Right cardiac atrium (tissue), 5 donors: ENCODE measurements at regions of chr19 and their contacts with region 1.

Region 1: GRCh38 chr19:2151339-2152229 is at the start of gene AP3D1:
- DNase-seq: peak; percentile 100
- ATAC-seq: peak; percentile 98 to 99
- H3K4me3 ChIP-seq: peak within 1 kb of the TSS; percentile 64
- H3K27ac ChIP-seq: peak within 1 kb of the TSS; percentile 31
- H3K4me1 ChIP-seq: peaks cover 6% of the 10 kb centered on the region
- H3K27me3 ChIP-seq: no peaks in the 10 kb centered on the region
- total RNA-seq, gene AP3D1: 82.7 to 145 (median 92.9) TPM

Region 2: GRCh38 chr19:2096480-2097329 is 54.9 kb before region 1 on chr19 and contains the start of gene IZUMO4:
- intact Hi-C with region 1: no loop called
- DNase-seq: peak; percentile 99 to 100 (median 100)
- ATAC-seq: peak; percentile 89 to 91
- H3K4me3 ChIP-seq: peak within 1 kb of the TSS; percentile 68
- H3K27ac ChIP-seq: peak within 1 kb of the TSS; percentile 79
- H3K4me1 ChIP-seq: peaks cover 3% of the 10 kb centered on the region
- H3K27me3 ChIP-seq: no peaks in the 10 kb centered on the region
- total RNA-seq, gene IZUMO4: 1.1 to 3.3 (median 2.3) TPM

Region 3: DNA sequence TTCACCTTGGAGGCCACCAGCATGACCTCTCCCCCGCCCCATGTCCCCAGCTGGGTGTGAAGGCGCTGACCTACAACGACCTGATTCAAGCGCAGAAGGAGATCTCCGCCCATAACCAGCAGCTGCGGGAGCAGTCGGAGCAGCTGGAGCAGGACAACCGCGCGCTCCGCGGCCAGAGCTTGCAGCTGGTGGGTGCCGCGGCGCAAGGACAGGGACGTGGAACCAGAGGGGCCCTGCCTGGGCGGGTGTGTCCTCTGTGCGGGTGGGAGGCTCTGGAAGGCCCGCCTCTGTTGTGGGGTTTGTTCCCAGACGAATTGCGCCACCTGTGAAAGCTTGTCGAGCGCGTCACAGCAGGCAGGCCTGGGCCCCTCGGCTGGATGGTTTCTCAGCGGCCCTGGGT is 62.2 kb after region 1 on chr19:
- intact Hi-C with region 1: loop called in 1 of 4 experiments (anchors 10 kb)
- DNase-seq: no peak
- ATAC-seq: no peak
- H3K4me3 ChIP-seq: no peak overlapping the region
- H3K27ac ChIP-seq: no peak overlapping the region
- H3K4me1 ChIP-seq: no peaks in the 10 kb centered on the region
- H3K27me3 ChIP-seq: no peaks in the 10 kb centered on the region

Region 4: GRCh38 chr19:2221918-2222317 is 70.3 kb after region 1 on chr19:
- intact Hi-C with region 1: loop called in 2 of 4 experiments (anchors 10 kb)
- DNase-seq: no peak
- ATAC-seq: peak in 1 of 2 donors; percentile 2
- H3K4me3 ChIP-seq: no peak overlapping the region
- H3K27ac ChIP-seq: no peak overlapping the region
- H3K4me1 ChIP-seq: no peaks in the 10 kb centered on the region
- H3K27me3 ChIP-seq: no peaks in the 10 kb centered on the region

Region 5: DNA sequence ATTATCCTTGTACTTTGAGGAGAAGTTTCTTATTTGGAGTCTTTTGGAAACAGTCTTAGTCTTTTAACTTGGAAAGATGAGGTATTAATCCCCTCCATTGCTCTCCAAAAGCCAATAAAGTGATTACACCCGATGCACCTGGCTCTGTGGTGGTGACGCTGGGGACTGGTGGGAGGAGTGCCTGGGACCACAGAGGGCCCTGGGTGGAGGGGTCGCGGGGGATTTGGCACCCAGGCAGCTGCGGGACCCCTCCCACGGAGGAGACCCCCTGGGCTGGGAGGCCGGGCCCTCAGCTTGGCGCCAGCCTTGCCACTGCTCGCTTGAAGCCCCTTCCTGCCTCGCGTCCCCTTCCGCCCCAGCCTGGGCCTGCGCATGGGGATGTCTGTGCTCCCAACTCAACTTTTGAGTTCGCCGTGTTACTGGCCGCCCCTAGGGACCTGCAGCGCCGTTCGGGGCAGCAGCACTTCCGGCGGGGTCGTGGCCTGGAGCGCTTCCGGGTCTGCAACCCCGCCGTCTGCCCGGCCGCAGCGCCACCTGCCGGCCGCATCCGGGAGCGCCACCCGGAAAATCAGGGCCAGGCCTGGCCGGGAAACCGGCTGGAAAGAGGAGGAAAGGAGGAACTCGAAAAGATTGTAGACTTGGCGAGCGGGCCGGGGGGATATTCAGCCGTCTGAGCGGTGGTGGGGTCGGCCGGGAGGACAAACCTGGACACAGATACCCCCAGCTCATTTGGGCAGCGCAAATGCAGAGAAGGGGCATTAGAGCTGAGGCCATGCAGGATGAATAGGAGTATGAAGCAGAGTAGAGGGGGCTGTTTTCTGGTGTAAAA is 122.0 kb after region 1 on chr19:
- intact Hi-C with region 1: loop called in 1 of 4 experiments (anchors 5 kb)
- DNase-seq: peak; percentile 80 to 93 (median 92)
- ATAC-seq: peak; percentile 7 to 17
- H3K4me3 ChIP-seq: no peak overlapping the region
- H3K27ac ChIP-seq: peak overlapping the region; percentile 26
- H3K4me1 ChIP-seq: peaks cover 2% of the 10 kb centered on the region
- H3K27me3 ChIP-seq: no peaks in the 10 kb centered on the region

Region 6: GRCh38 chr19:2315818-2316353 is 164.3 kb after region 1 on chr19:
- intact Hi-C with region 1: loop called in 2 of 4 experiments (anchors 2 to 5 kb)
- DNase-seq: peak; percentile 69 to 89 (median 89)
- ATAC-seq: peak; percentile 83 to 84
- H3K4me3 ChIP-seq: no peak overlapping the region
- H3K27ac ChIP-seq: no peak overlapping the region
- H3K4me1 ChIP-seq: no peaks in the 10 kb centered on the region
- H3K27me3 ChIP-seq: no peaks in the 10 kb centered on the region

Region 7: GRCh38 chr19:2385053-2385721 is 233.6 kb after region 1 on chr19:
- intact Hi-C with region 1: loop called in 1 of 4 experiments (anchors 10 kb)
- DNase-seq: no peak
- ATAC-seq: no peak
- H3K4me3 ChIP-seq: no peak overlapping the region
- H3K27ac ChIP-seq: no peak overlapping the region
- H3K4me1 ChIP-seq: no peaks in the 10 kb centered on the region
- H3K27me3 ChIP-seq: no peaks in the 10 kb centered on the region